MCF 10A (cell line): ENCODE measurements at regions of chr15 and their contacts with region 1.

Region 1: DNA sequence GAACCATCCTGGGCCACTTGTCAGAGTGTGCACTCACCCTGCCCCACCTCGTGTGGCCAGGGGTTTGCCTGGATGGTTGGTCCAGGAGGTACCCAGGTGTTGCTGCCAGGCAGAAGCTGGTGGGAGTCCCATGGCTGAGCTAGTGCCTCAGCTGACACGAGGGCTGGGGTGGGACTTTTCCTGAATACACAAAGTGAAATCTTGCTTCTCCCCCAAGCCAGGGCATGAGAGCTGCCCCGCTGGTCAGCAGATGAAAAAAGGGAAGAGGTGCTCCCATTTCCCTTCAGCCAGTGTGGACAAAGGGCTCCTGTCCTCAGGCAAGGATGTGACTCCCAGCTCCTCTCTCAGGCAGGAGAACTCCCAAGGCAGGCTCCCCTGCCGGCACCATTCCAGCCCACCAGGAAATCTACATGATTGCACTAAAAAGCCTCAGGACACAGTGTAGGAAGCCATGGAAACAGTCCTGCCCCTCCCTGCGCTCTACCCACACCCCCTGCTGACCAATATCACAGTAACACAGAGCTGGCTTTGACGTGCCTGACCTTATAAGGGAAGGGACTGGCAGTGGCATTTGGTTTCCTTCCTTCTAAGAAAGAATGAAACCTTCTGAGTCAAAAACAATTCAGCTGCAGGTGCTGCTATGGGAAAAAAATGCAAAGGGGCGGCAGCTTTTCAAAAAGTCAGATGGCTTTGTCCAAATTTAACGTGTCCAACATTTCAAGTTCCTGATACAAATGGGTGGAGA is 33.9 kb downstream of the MYO5C start:
- DNase-seq: peak; percentile 95
- H3K4me3 Mint-ChIP-seq: peak overlapping the region; percentile 4
- H3K27ac Mint-ChIP-seq: peak overlapping the region; percentile 90
- H3K4me1 Mint-ChIP-seq: peaks cover 25% of the 10 kb centered on the region
- H3K27me3 Mint-ChIP-seq: no peaks in the 10 kb centered on the region
- CTCF ChIP-seq: peak; percentile 12

Region 2: DNA sequence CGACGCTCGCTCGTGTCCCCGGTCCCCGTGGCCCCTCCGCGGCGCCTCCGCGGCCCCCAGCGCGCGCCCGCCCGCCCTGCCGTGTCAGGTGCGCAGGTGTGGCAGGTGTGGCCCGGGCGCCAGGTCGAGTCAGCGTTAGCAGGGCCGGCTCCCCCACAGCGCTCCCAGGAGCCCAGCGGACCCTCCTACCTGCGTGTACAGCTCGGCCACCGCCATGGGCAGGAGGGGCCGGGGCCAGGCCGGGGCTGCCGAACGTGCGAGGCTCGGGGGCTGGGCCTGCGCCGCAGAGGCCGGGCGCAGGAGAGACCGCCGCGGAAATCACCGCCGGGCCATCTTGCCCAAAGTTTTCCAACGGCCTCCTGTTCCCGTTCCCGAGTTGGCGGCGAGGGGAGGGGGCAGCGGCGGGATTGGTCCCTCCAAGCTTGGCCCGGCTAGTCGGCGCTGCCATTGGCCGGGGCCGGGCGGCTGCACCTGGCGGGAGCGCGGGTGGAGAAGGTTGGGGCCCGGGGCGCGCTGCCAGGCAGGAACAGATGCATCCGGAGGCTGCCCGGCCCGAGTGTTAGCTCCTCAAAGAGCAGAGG is 33.8 kb after region 1 on chr15 and contains the start of gene MYO5C:
- CTCF ChIA-PET with region 1: interaction called, 34 read pairs
- POLR2A ChIA-PET with region 1: interaction called, 11 read pairs
- intact Hi-C with region 1: loop called (anchors 5 kb)
- DNase-seq: peak; percentile 91
- H3K4me3 Mint-ChIP-seq: peak within 1 kb of the TSS; percentile 69
- H3K27ac Mint-ChIP-seq: peak within 1 kb of the TSS; percentile 77
- H3K4me1 Mint-ChIP-seq: peaks cover 31% of the 10 kb centered on the region
- H3K27me3 Mint-ChIP-seq: no peaks in the 10 kb centered on the region
- CTCF ChIP-seq: no peak
- total RNA-seq, gene MYO5C: 25.7 and 29.4 TPM in 2 replicates